CD4-positive, alpha-beta memory T cell (primary cell): ENCODE measurements at regions of chr12 and their contacts with region 1.

Region 1: DNA sequence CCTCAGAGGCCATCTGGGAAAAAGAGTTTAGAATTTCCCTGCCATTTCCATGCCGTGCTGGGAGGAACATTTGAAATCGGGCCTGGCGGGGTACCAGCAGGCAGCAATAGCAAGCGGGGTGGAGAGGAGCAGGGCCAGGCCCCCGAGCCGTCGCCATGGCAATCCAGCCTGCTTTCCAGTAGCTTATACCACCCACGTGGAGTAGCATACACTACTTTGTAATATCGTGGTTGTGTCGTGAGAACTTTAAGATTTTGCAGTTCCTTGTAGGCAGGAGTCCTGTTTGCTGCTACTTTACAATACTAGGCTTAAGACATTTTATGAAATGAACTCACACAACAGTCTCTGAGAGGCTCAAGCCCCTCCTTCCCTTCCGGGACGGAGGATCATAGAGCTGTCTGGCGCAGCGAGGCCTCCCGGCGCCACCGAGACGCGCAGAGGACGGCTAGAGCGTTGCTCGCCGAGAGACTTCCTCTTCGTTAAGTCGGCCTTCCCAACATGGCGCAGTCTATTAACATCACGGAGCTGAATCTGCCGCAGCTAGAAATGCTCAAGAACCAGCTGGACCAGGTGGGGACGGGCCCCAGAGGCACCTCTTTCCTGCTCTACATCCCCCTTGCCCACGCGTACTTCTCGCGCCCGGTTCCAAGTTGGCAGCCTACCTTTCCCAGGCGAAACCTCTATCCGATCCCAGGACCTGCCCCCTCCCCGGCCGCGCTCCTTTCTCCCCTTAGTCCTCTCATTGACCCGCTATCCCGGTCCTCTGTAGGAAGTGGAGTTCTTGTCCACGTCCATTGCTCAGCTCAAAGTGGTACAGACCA is at the start of gene PFDN5:
- DNase-seq: peak; percentile 87 to 93 (median 91)
- H3K4me3 ChIP-seq: peak within 1 kb of the TSS; percentile 63 to 94
- H3K4me3 Mint-ChIP-seq: peak within 1 kb of the TSS; percentile 98 to 100 (median 99)
- H3K27ac ChIP-seq: peak within 1 kb of the TSS; percentile 81
- H3K27ac Mint-ChIP-seq: peak within 1 kb of the TSS; percentile 97 to 100 (median 99)
- H3K4me1 ChIP-seq: peaks cover 49% of the 10 kb centered on the region
- H3K4me1 Mint-ChIP-seq: peaks cover 23 to 59% (median 44%) of the 10 kb centered on the region in 4 donors
- H3K27me3 ChIP-seq: no peaks in the 10 kb centered on the region
- H3K27me3 Mint-ChIP-seq: no peaks in the 10 kb centered on the region
- total RNA-seq, gene PFDN5: 717 to 718 TPM

Region 2: GRCh38 chr12:53005986-53006809 is 289.1 kb before region 1 on chr12 and contains the start of gene EIF4B:
- CTCF ChIA-PET with region 1: no interaction called
- POLR2A ChIA-PET with region 1: interaction called, 6 read pairs
- intact Hi-C with region 1: loop called (anchors 1 kb)
- DNase-seq: peak; percentile 97 to 100 (median 100)
- H3K4me3 ChIP-seq: peak within 1 kb of the TSS; percentile 99 to 100
- H3K4me3 Mint-ChIP-seq: peak within 1 kb of the TSS; percentile 99 to 100 (median 99)
- H3K27ac ChIP-seq: peak within 1 kb of the TSS; percentile 94
- H3K27ac Mint-ChIP-seq: peak within 1 kb of the TSS; percentile 99 to 100 (median 99)
- H3K4me1 ChIP-seq: peaks cover 51% of the 10 kb centered on the region
- H3K4me1 Mint-ChIP-seq: peaks cover 26 to 58% (median 43%) of the 10 kb centered on the region in 4 donors
- H3K27me3 ChIP-seq: no peaks in the 10 kb centered on the region
- H3K27me3 Mint-ChIP-seq: no peaks in the 10 kb centered on the region
- total RNA-seq, gene EIF4B: 730 to 777 TPM

Region 3: DNA sequence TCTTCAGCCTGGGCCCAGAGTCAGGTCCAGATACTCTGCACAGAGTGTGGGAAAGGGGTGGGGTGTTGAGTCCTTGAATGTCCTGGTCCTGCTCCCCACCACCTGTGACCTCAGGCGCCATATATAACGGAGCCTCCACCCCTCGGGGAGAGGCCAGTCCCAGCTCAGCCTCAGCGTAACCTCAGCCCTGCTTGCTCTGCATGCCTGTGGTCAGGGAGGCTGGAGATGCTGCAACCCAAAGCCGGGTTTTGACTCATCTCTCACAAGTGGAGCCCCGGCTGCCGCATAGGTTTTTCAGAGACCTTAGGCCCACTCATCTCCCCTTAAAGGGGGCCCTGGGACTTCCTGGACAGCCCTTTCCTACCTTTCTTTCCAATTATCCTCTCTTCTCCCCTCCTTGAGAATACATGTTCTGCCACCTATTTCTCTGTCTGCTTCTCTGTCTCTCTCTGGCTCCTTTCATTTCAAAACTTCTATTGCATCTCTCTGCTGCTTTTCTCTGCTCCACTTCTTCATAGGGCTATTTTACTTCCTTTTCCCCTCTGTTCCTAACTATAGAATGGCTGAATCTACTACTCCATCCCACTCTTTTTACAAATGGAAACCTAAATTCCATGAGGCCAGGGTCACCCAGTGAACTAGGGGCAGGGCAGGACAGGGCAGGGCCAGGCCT is 89.4 kb before region 1 on chr12:
- CTCF ChIA-PET with region 1: interaction called, 339 read pairs
- POLR2A ChIA-PET with region 1: interaction called, 16 read pairs
- intact Hi-C with region 1: no loop called
- DNase-seq: peak in 4 of 5 donors; percentile 32 to 80 (median 41)
- H3K4me3 ChIP-seq: peak overlapping the region; percentile 85 to 88
- H3K4me3 Mint-ChIP-seq: peak overlapping the region; percentile 81 to 98 (median 88)
- H3K27ac ChIP-seq: peak overlapping the region; percentile 79
- H3K27ac Mint-ChIP-seq: peak overlapping the region; percentile 76 to 96 (median 91)
- H3K4me1 ChIP-seq: peaks cover 99% of the 10 kb centered on the region
- H3K4me1 Mint-ChIP-seq: peaks cover 40 to 84% (median 64%) of the 10 kb centered on the region in 4 donors
- H3K27me3 ChIP-seq: no peaks in the 10 kb centered on the region
- H3K27me3 Mint-ChIP-seq: no peaks in the 10 kb centered on the region

Region 4: GRCh38 chr12:53220801-53221202 is 74.5 kb before region 1 on chr12:
- CTCF ChIA-PET with region 1: interaction called, 339 read pairs
- POLR2A ChIA-PET with region 1: interaction called, 50 read pairs
- intact Hi-C with region 1: loop called (anchors 1 kb)
- DNase-seq: peak; percentile 60 to 85 (median 65)
- H3K4me3 ChIP-seq: peak overlapping the region; percentile 73 to 82
- H3K4me3 Mint-ChIP-seq: peak overlapping the region; percentile 95 to 99 (median 98)
- H3K27ac ChIP-seq: peak overlapping the region; percentile 98
- H3K27ac Mint-ChIP-seq: peak overlapping the region; percentile 93 to 99 (median 97)
- H3K4me1 ChIP-seq: peaks cover 78% of the 10 kb centered on the region
- H3K4me1 Mint-ChIP-seq: peaks cover 63 to 93% (median 72%) of the 10 kb centered on the region in 4 donors
- H3K27me3 ChIP-seq: no peaks in the 10 kb centered on the region
- H3K27me3 Mint-ChIP-seq: no peaks in the 10 kb centered on the region

Region 5: GRCh38 chr12:53308276-53308675 is 13.0 kb after region 1 on chr12:
- CTCF ChIA-PET with region 1: interaction called, 3 read pairs
- POLR2A ChIA-PET with region 1: interaction called, 11 read pairs
- intact Hi-C with region 1: no loop called
- DNase-seq: no peak
- H3K4me3 ChIP-seq: no peak overlapping the region
- H3K4me3 Mint-ChIP-seq: peak overlapping the region in 1 of 8 donors; percentile 5
- H3K27ac ChIP-seq: no peak overlapping the region
- H3K27ac Mint-ChIP-seq: peak overlapping the region in 3 of 7 donors; percentile 2 to 22 (median 17)
- H3K4me1 ChIP-seq: peaks cover 4% of the 10 kb centered on the region
- H3K4me1 Mint-ChIP-seq: peaks cover 0 to 2% (median under 1%) of the 10 kb centered on the region in 4 donors
- H3K27me3 ChIP-seq: no peaks in the 10 kb centered on the region
- H3K27me3 Mint-ChIP-seq: no peaks in the 10 kb centered on the region

Region 6: GRCh38 chr12:53379389-53380103 is 84.3 kb after region 1 on chr12:
- CTCF ChIA-PET with region 1: no interaction called
- POLR2A ChIA-PET with region 1: interaction called, 13 read pairs
- intact Hi-C with region 1: loop called (anchors 1 kb)
- DNase-seq: peak; percentile 99 to 100 (median 100)
- H3K4me3 ChIP-seq: peak overlapping the region; percentile 57 to 86
- H3K4me3 Mint-ChIP-seq: no peak overlapping the region
- H3K27ac ChIP-seq: peak overlapping the region; percentile 70
- H3K27ac Mint-ChIP-seq: no peak overlapping the region
- H3K4me1 ChIP-seq: peaks cover 46% of the 10 kb centered on the region
- H3K4me1 Mint-ChIP-seq: peaks cover 28 to 37% (median 34%) of the 10 kb centered on the region in 4 donors
- H3K27me3 ChIP-seq: no peaks in the 10 kb centered on the region
- H3K27me3 Mint-ChIP-seq: no peaks in the 10 kb centered on the region

Region 7: DNA sequence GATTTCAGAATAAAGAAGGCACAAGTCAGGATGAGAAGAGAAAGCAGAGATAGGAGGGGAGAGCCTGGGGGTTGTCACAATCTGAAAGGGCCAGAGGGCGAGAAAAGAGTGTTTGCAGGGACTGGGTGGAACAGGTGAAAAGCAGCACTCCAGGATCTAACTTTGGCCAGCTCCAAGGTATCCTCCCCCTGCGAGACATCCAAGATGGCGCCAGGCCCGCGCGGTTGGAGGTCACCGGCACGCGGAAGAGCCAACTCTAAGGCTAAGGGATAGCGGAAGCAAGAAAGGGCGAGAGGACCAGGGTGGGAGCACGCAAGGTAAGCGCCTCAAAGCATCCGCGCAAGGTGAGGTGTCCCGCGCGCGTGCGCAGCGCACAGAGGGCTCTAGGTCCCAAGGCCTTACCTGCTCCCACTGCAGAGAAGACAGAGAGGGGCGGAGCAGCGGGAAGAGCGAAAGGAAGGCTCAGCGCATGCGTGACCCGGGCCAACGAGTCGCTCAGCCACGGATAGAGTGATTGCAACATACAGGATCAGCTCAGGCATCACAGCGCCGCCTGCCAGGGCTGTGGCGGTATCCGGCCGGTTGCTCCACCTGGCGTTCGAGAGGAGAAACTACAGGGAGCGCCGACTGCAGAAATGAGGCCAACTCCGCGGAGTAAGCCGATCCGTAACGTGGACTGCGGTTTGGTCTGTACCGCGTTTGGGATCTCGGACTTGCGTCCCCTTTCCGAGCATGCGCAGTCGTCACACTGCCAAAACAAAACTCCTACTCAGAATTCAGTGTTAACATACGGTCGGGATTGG is 380.6 kb after region 1 on chr12 and contains the start of gene ATP5MC2:
- CTCF ChIA-PET with region 1: no interaction called
- POLR2A ChIA-PET with region 1: no interaction called
- intact Hi-C with region 1: loop called (anchors 5 kb)
- DNase-seq: peak; percentile 96 to 98 (median 98)
- H3K4me3 ChIP-seq: peak within 1 kb of the TSS; percentile 82 to 89
- H3K4me3 Mint-ChIP-seq: peak within 1 kb of the TSS; percentile 91 to 98 (median 95)
- H3K27ac ChIP-seq: peak within 1 kb of the TSS; percentile 59
- H3K27ac Mint-ChIP-seq: peak within 1 kb of the TSS; percentile 93 to 98 (median 97)
- H3K4me1 ChIP-seq: peaks cover 36% of the 10 kb centered on the region
- H3K4me1 Mint-ChIP-seq: peaks cover 18 to 40% (median 31%) of the 10 kb centered on the region in 4 donors
- H3K27me3 ChIP-seq: peaks cover 8% of the 10 kb centered on the region
- H3K27me3 Mint-ChIP-seq: peaks cover 15% of the 10 kb centered on the region in 2 donors
- total RNA-seq, gene ATP5MC2: 238 to 246 TPM